ENCODE measurements at regions of chr14 and their contacts with region 1.

Region 1: DNA sequence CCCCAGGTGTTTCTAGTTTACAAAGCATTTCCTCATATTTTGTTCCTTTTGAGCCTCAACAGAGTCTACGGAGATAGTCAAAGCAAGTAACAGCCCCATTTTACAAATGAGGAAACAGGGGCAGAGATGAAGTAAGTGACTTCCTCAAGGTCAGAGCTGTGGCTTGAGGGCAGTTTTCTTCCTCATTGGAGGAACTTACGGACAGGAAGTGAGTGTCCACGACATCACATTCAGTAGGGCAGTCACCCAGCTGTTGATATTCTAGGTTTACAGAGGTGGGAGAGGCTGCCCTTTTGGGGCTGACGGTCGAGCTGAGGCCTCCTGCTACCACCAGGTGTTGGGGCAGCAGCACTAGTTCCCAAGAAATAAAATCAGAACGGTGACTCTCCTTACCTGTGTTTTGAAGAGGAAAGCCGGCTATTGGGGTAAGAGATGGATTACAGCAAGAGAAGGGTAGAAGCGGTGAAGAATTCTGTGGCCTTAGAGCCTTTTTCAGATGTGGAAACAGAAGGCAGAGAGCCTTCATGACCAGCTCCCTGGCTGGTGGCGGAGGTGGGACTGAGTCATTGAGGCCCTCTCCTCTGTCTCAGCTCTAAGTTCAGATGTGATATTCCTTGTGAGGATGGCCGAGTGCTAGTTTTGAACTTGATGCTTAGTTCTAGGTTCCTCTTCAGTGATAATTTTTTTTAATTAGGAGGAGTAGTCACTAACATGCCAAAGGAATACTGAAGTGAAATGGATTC is 41.7 kb downstream of the SUSD6 start:
- DNase-seq: no peak
- ATAC-seq: peak; percentile 42

Region 2: DNA sequence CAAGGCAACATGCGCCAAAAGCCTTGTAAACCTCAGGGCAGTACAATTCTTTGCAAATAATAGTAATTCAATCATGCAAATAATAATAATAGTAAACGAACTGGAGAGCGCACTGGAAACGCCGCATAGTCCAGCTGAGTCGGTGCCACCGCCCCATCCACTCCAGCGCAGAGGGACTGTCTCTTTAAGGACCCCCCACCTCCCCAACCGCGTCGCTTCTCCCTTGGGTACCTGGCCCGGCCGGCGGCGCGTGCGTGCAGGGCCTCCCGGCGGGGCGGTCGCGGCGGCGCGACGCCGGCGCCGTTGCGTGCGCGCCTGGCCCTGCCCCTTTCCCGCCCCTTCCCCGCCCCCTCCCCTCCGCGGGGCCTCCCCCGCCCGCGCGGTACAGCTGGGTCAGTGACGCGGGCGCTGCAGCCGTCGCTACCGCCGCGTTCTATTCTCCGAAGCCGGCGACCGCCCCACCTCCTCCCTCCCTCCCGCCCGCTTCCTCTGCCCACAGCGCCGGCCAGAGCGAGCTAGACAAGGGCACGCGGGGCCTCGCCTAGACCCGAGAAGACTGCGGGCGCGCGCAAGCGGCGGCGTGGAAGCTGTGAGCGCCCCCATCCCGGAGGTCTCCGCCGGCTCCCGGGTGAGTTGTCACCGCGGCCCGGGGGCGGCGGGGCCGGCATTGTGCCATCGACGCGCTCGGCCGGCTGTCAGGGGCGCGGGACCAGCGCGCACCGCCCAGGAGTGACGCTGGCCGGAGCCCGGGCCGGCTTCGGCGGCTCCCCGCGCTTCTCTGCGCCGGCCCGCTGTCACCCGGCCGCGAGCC is 41.7 kb before region 1 on chr14 and contains the start of gene SUSD6:
- intact Hi-C with region 1: loop called (anchors 5 kb)
- DNase-seq: peak; percentile 97
- ATAC-seq: peak; percentile 90
- total RNA-seq, gene SUSD6: 22.4 TPM

Measured in Right ventricle myocardium inferior (tissue), 1 donor.